ENCODE measurements at regions of chr19 and their contacts with region 1.

Region 1: DNA sequence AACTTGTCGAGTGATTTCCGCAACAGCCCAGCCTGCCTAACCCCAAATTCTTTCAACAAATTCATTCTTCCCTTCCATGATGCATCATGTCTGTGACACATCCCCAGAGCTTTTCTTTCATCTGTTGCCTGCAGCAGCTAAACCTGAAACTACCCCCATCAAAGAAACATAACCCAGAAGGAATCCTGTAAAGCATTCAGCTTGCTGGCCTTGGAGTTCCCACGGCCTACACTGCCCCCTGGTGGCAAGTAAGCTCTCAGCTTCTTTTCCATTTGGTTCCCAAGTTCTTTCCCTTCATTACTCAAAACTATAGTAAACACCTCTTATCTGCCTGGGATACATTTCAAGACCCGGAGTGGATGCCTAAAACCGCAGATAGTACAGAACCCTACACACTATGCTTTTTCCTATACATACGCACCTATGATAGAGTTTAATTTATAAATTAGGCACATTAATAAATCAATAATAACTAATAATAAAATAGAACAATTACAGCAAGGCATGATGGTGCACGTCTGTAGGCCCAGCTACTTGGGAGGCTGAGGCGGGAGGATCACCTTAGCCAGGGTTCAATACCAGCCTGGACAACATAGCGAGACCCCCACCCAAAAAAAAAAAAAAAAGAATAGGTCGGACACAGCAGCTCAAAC is 7.4 kb downstream of the ETHE1 start:
- DNase-seq: peak; percentile 84 to 92 (median 89)
- H3K4me3 ChIP-seq: no peak overlapping the region
- H3K27ac ChIP-seq: no peak overlapping the region
- H3K4me1 ChIP-seq: peaks cover 0 to under 1% (median 0%) of the 10 kb centered on the region in 3 donors
- H3K27me3 ChIP-seq: no peaks in the 10 kb centered on the region
- CTCF ChIP-seq: peak; percentile 93

Region 2: DNA sequence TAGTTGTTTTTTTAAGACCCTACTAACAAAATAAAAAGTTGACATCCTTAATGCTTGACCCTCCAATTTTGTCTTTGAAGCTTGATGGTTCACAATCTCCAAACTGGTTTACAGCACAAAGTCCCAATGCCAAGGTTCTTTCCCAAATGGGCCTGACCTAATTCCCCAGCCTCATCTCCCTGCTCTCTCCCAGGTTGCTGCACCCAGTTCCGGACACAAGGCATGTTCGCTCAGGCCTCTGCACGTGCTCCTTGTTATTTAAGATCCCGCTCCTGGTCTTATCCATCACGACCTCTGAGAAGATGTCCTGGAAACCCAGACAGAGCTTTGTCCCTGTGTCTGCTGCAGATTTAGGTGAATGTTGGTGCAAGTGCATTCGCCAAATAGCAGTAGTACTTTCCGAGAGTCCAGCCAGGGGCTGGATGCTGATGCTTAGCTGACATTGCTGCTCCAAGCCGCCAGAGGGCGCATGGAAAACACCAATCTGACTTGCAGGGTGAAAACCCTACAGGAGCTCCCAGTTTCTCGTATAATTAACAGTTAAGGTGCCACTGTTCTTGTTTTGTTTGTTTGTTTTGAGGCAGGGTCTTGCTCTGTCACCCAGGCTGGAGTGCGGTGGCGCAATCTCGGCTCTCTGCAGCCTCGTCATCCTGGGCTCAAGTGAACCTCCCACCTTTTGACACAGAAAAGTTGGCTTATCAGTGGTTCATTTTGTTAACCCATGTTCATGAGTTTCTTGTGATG is 72.6 kb before region 1 on chr19:
- intact Hi-C with region 1: loop called (anchors 5 kb)
- DNase-seq: peak; percentile 79 to 91 (median 86)
- H3K4me3 ChIP-seq: no peak overlapping the region
- H3K27ac ChIP-seq: no peak overlapping the region
- H3K4me1 ChIP-seq: peaks cover 0 to 2% (median 0%) of the 10 kb centered on the region in 3 donors
- H3K27me3 ChIP-seq: no peaks in the 10 kb centered on the region
- CTCF ChIP-seq: peak; percentile 98

Region 3: DNA sequence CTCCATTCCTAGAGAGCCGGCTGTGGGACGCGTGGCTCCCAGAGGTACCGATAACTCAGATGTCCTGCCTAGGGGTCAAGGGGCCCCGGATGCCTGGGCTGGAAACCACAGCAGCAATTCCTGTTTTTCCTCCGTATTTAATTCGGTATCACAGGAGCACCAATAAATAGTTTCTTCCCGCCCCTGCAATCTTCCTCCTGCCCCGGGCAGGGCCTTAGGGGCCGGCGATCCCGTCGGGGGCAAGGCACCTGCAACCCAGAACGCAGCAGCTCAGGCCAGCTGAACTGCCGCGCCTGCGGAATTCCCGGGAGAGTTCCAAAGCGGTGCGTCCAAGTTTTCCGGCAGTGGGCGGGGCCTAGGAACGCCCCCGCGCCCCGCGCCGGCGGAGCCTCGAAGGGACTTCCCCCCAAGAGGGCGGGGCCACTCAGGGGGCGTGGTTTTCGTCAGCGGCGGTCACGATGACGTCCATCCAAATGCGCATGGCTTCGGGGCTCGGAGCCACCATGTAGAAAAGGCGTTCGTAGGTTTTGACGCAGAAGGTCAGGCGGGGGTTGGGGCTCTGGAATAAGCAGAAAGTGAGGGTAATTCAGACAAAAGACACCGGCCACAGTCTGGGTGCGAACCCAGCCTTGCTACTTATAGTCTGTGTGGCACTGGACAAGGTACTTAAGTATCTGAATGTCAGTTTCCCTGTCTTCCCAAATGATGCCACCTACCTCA is 44.4 kb before region 1 on chr19:
- intact Hi-C with region 1: no loop called
- DNase-seq: peak; percentile 96 to 98 (median 97)
- H3K4me3 ChIP-seq: peak overlapping the region; percentile 64 to 79 (median 69)
- H3K27ac ChIP-seq: peak overlapping the region; percentile 86 to 87
- H3K4me1 ChIP-seq: no peaks in the 10 kb centered on the region
- H3K27me3 ChIP-seq: no peaks in the 10 kb centered on the region
- CTCF ChIP-seq: no peak

Region 4: DNA sequence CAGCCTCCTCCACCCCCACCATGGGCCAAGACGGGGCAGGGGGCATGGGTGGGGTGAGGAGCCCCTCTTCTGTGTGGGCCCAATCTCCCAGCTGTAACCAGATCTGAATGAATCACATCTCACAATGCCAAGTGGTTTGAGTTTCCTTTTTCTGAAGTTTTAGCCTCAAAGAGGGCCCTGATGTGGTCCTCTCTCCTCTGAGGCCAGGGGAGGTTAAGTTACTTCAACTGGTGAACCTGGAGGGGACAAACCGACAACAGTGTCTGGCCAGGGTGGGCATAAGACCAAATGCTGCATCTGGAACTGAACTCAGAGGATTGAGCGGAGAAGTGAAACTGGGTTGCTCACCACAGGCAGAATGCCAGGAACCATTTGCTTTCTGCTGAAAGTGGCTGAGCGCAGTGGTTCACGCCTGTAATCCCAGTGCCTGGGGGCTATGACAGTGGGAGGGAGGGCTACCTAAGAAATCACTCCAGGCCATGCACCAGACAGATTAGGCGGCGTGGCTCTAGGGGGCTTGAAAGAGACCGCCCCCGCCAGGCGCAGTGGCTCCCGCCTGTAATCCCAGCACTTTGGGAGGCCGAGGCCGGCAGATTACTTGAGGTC is 180.9 kb after region 1 on chr19:
- intact Hi-C with region 1: no loop called
- DNase-seq: no peak
- H3K4me3 ChIP-seq: no peak overlapping the region
- H3K27ac ChIP-seq: peak overlapping the region in 1 of 2 donors; percentile 66
- H3K4me1 ChIP-seq: peaks cover 0 to 3% (median 0%) of the 10 kb centered on the region in 3 donors
- H3K27me3 ChIP-seq: no peaks in the 10 kb centered on the region
- CTCF ChIP-seq: no peak